Activated CD8-positive, alpha-beta memory T cell treated with anti-CD3 and anti-CD28 coated beads, Interleukin-2, amount 10 ng/mL, durations not matched to agents 7 days and 5 days (primary cell): ENCODE measurements at regions of chr5 and their contacts with region 1.

Region 1: GRCh38 chr5:132639706-132640130 is 18.3 kb upstream of the IL13 start:
- DNase-seq: peak; percentile 81
- ATAC-seq: peak; percentile 54
- H3K4me3 Mint-ChIP-seq: peak overlapping the region; percentile 16
- H3K27ac Mint-ChIP-seq: peak overlapping the region; percentile 86
- H3K4me1 Mint-ChIP-seq: peaks cover 89% of the 10 kb centered on the region
- H3K27me3 Mint-ChIP-seq: no peaks in the 10 kb centered on the region

Region 2: DNA sequence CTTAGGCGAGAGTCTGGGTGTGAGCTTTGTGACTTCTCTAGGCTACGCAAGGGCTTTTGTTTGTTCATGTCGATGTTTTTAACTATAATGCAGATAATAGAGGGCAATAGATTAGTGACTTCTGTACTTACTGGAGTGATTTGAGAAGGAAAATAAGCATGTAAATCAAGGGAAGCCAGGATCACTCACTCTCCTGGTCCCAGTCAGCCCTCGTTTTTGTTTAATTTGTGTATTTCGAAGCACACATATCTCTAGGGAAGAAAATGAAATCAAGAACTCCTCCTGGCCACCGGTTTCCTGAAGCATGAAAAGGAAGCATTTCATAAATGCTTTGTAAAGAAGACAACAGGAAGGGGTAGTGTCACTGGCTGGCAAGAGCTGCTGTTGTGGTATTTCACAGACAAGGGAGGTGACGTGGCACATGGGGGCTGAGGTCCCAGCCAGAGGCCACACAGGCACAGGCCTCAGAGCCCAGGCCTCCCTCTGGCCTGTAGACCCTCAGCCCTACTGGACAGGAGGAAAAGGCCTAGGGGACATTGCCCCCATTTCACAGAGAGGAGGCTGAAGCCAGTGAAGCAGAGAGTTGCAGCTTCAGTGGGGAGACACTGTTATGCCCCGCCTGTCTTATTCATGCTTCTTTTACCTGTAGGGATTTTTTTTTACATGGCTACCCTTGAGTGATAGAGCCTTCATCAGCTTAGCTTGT is 183.3 kb before region 1 on chr5:
- CTCF ChIA-PET with region 1: no interaction called
- DNase-seq: peak; percentile 85
- ATAC-seq: peak; percentile 65
- H3K4me3 Mint-ChIP-seq: peak overlapping the region; percentile 54
- H3K27ac Mint-ChIP-seq: peak overlapping the region; percentile 99
- H3K4me1 Mint-ChIP-seq: peaks cover 90% of the 10 kb centered on the region
- H3K27me3 Mint-ChIP-seq: no peaks in the 10 kb centered on the region

Region 3: DNA sequence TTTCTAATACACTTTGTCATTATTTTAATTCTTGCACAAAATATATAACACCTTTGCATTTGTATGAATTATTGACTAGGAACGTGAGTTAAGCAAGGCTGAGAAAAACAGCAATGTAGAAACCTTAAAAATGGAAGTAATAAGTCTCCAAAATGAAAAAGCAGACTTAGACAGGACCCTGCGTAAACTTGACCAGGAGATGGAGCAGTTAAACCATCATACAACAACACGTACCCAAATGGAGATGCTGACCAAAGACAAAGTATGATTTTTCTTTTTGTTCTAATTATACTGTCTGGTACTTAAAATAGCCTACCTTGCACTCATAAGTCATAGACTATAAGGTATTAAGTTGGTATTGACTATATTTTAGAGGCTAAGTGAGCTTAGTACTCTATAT is 48.6 kb before region 1 on chr5:
- CTCF ChIA-PET with region 1: no interaction called
- DNase-seq: no peak
- ATAC-seq: peak; percentile 51
- H3K4me3 Mint-ChIP-seq: no peak overlapping the region
- H3K27ac Mint-ChIP-seq: no peak overlapping the region
- H3K4me1 Mint-ChIP-seq: peaks cover 18% of the 10 kb centered on the region
- H3K27me3 Mint-ChIP-seq: no peaks in the 10 kb centered on the region

Region 4: DNA sequence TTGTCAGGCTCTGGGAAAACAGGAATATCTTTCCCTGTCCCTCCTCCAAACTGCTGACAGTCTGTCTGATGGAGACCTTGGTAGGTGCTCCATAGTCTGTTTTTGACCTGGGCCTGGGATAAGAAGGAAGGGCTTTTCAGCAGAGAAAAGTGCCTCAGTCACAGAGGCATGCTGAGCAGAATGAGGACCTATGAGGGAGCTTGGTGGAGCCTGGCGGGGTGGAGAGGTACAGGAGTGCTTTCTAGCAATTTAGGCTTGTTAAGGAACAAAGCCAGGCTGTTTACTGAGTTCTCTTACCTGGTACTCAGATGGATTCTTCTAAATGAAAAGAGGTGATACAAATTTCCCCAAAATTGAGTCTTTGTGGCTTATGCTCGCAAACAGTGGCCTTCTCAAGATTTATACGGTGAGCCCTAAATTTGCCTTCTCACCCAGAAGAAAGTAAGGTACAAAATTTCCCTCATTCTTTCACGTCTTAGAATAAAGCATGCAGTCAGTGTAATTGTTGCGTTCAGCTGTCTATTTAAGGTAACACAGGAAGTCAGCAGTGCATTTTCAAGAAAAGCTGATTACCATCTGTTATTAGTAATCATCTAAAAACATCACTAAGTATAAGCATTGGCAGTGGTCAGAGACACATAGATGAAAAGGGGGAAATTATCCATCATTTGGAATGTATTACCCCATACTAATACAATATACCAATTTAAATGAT is 10.3 kb before region 1 on chr5:
- CTCF ChIA-PET with region 1: interaction called, 10 read pairs
- DNase-seq: no peak
- ATAC-seq: peak; percentile 72
- H3K4me3 Mint-ChIP-seq: peak overlapping the region; percentile 22
- H3K27ac Mint-ChIP-seq: peak overlapping the region; percentile 92
- H3K4me1 Mint-ChIP-seq: peaks cover 51% of the 10 kb centered on the region
- H3K27me3 Mint-ChIP-seq: no peaks in the 10 kb centered on the region

Region 5: GRCh38 chr5:132662925-132663770 is 23.4 kb after region 1 on chr5:
- CTCF ChIA-PET with region 1: interaction called, 15 read pairs
- DNase-seq: peak; percentile 66
- ATAC-seq: peak; percentile 70
- H3K4me3 Mint-ChIP-seq: no peak overlapping the region
- H3K27ac Mint-ChIP-seq: peak overlapping the region; percentile 90
- H3K4me1 Mint-ChIP-seq: peaks cover 61% of the 10 kb centered on the region
- H3K27me3 Mint-ChIP-seq: no peaks in the 10 kb centered on the region

Region 6: DNA sequence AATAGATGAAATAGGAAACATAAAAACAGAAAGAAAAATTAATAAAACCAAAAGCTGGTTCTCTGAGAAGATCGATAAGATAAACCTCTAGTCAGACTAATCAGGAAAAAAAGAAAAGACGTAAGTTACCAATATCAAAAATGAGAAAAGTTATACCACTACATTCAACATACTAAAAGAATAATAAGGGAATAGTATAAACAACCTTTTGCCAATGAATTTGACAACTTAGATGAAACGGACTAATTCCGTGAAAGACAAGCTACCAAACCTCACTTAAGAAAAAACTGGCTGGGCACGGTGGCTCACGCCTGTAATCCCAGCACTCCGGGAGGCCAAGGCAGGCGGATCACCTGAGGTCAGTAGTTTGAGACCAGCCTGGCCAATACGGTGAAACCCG is 90.2 kb after region 1 on chr5:
- CTCF ChIA-PET with region 1: no interaction called
- DNase-seq: no peak
- ATAC-seq: no peak
- H3K4me3 Mint-ChIP-seq: no peak overlapping the region
- H3K27ac Mint-ChIP-seq: no peak overlapping the region
- H3K4me1 Mint-ChIP-seq: peaks cover 29% of the 10 kb centered on the region
- H3K27me3 Mint-ChIP-seq: no peaks in the 10 kb centered on the region

Region 7: GRCh38 chr5:132841305-132842086 is 201.8 kb after region 1 on chr5:
- CTCF ChIA-PET with region 1: no interaction called
- DNase-seq: no peak
- ATAC-seq: peak; percentile 36
- H3K4me3 Mint-ChIP-seq: no peak overlapping the region
- H3K27ac Mint-ChIP-seq: no peak overlapping the region
- H3K4me1 Mint-ChIP-seq: peaks cover 4% of the 10 kb centered on the region
- H3K27me3 Mint-ChIP-seq: no peaks in the 10 kb centered on the region